ENCODE measurements at regions of chr1 and their contacts with region 1.

Region 1: GRCh38 chr1:101136739-101137138 is 100.1 kb upstream of the S1PR1 start:
- DNase-seq: peak; percentile 45
- ATAC-seq: peak; percentile 85
- H3K4me3 Mint-ChIP-seq: peak overlapping the region; percentile 38
- H3K27ac Mint-ChIP-seq: peak overlapping the region; percentile 91
- H3K4me1 Mint-ChIP-seq: peaks cover 69% of the 10 kb centered on the region
- H3K27me3 Mint-ChIP-seq: no peaks in the 10 kb centered on the region

Region 2: GRCh38 chr1:100785470-100786052 is 351.2 kb before region 1 on chr1:
- CTCF ChIA-PET with region 1: no interaction called
- POLR2A ChIA-PET with region 1: no interaction called
- intact Hi-C with region 1: no loop called
- DNase-seq: no peak
- ATAC-seq: no peak
- H3K4me3 Mint-ChIP-seq: no peak overlapping the region
- H3K27ac Mint-ChIP-seq: no peak overlapping the region
- H3K4me1 Mint-ChIP-seq: no peaks in the 10 kb centered on the region
- H3K27me3 Mint-ChIP-seq: peaks cover 11% of the 10 kb centered on the region

Region 3: DNA sequence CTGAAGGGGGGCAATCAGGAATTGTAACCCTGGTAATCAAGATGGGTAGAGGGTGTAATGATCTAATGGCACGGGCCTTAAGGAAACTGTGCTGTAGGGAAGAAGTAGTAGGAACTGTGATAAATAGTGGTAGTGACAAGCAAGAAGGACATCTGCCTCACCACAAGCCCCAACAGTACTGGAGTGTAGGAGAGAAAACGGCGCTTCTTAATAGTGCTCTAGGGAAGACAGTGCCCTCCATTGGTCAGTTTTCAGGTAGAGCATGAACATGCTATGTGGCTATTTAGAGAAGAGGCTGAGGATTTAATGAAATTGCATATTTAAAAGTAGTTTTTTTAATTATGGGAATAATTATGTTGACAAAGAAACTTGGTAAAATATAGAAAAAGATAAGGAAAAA is 208.6 kb before region 1 on chr1:
- CTCF ChIA-PET with region 1: no interaction called
- POLR2A ChIA-PET with region 1: no interaction called
- intact Hi-C with region 1: loop called in 1 of 2 experiments (anchors 2 kb)
- DNase-seq: no peak
- ATAC-seq: no peak
- H3K4me3 Mint-ChIP-seq: no peak overlapping the region
- H3K27ac Mint-ChIP-seq: no peak overlapping the region
- H3K4me1 Mint-ChIP-seq: peaks cover 62% of the 10 kb centered on the region
- H3K27me3 Mint-ChIP-seq: no peaks in the 10 kb centered on the region

Region 4: GRCh38 chr1:101025657-101026504 is 110.9 kb before region 1 on chr1 and contains the start of gene DPH5:
- CTCF ChIA-PET with region 1: no interaction called
- POLR2A ChIA-PET with region 1: no interaction called
- intact Hi-C with region 1: loop called in 1 of 2 experiments (anchors 5 kb)
- DNase-seq: peak; percentile 95
- ATAC-seq: peak; percentile 96
- H3K4me3 Mint-ChIP-seq: peak within 1 kb of the TSS; percentile 93
- H3K27ac Mint-ChIP-seq: peak within 1 kb of the TSS; percentile 98
- H3K4me1 Mint-ChIP-seq: peaks cover 55% of the 10 kb centered on the region
- H3K27me3 Mint-ChIP-seq: no peaks in the 10 kb centered on the region
- total RNA-seq, gene DPH5: 48.4 to 59.6 TPM

Region 5: DNA sequence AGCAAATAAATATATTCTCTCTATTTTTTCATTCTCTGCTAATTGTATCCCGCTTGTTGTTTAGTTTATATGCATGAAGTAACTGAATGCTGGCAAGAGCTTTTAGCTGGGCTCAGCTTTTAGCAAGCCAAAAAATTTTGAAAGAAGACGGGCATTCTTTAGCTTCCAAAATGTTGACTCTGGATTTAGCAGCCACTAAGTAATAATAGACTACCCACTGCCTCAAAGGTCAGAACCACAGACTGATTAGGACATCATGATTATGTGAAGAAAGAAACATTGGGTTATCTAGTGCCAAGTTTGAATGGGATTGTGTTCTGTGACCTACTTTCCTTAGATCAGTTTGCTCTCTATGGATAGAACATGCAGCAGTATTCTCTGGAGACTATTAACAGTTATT is 30.9 kb before region 1 on chr1:
- CTCF ChIA-PET with region 1: no interaction called
- POLR2A ChIA-PET with region 1: no interaction called
- intact Hi-C with region 1: no loop called
- DNase-seq: no peak
- ATAC-seq: no peak
- H3K4me3 Mint-ChIP-seq: no peak overlapping the region
- H3K27ac Mint-ChIP-seq: no peak overlapping the region
- H3K4me1 Mint-ChIP-seq: peaks cover 31% of the 10 kb centered on the region
- H3K27me3 Mint-ChIP-seq: no peaks in the 10 kb centered on the region

Region 6: GRCh38 chr1:101148980-101149379 is 12.2 kb after region 1 on chr1:
- CTCF ChIA-PET with region 1: interaction called, 14 read pairs
- POLR2A ChIA-PET with region 1: interaction called, 4 read pairs
- intact Hi-C with region 1: no loop called
- DNase-seq: no peak
- ATAC-seq: peak; percentile 40
- H3K4me3 Mint-ChIP-seq: no peak overlapping the region
- H3K27ac Mint-ChIP-seq: no peak overlapping the region
- H3K4me1 Mint-ChIP-seq: peaks cover 49% of the 10 kb centered on the region
- H3K27me3 Mint-ChIP-seq: no peaks in the 10 kb centered on the region

Region 7: DNA sequence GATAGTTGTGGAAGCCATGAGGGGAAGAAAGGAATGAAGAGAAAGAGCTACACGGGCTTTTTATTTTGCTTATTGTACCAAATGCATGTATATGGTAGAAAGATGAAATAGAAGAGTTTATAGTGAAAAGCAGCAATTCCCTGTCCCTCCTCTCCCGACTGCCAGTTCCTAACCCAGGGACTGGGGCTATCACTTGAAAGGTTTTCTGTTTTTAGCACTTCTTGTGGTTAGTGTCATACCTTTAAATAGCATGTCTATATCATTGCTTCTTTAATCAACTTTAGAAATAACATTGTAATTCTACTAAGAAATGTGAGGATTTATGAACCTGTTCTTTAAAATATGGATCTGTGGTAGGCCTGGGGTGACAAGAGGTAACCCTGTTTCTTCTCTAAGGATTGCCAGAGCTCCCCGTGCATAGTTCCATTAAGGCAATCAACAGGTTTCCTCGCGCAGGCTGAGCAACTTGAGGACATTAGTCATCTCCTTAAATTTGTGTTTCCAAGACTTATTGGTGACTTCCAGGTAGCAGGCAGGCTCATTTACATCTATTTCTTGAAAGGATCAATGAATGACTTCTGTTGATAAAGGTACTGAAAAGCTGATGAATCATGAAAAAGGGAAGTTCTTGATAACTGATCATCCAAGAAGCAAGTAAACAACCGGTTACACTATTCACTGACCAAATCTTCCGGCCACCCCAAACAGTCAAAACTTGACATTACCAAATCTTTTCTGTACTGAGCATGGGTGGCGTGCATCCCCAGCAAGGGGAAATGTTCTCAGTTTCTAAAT is 62.3 kb after region 1 on chr1:
- CTCF ChIA-PET with region 1: interaction called, 3 read pairs
- POLR2A ChIA-PET with region 1: no interaction called
- intact Hi-C with region 1: loop called (anchors 1 to 2 kb)
- DNase-seq: peak; percentile 79
- ATAC-seq: peak; percentile 86
- H3K4me3 Mint-ChIP-seq: no peak overlapping the region
- H3K27ac Mint-ChIP-seq: peak overlapping the region; percentile 85
- H3K4me1 Mint-ChIP-seq: peaks cover 35% of the 10 kb centered on the region
- H3K27me3 Mint-ChIP-seq: no peaks in the 10 kb centered on the region

Region 8: DNA sequence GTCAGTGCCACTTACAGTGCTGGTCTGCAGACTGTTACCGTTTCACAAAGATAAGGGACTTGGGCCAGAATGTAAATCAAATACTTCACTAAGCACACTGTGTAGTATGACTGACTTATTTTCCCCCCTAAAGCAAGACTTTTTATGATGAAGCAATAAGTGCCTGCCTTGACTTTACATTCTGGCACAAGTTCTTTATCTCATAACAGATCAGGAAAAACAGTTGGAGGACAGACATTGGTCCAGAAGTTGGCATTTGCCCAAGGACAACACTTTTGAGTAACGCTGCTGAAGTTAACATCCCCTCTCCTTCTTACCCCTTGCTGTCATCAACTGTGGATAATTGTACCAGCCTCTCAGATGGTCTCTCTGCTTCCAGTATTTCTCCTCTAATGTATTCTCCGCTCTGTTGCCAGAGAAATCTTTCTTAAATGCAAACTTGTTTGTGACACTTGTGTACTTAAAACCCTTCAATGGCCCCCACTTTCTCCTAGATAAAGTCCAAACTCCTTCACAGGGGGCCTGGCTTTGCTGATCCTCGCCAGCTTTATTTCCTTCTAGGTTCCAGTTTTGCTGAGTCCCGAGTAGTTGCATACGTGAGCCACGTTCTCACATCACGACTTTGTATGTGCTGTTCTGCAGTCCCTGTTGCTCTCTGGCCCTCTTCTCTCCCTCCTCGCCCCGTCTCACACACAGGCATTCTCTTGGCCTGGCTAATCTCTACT is 145.7 kb after region 1 on chr1:
- CTCF ChIA-PET with region 1: interaction called, 31 read pairs
- POLR2A ChIA-PET with region 1: interaction called, 5 read pairs
- intact Hi-C with region 1: loop called in 1 of 2 experiments (anchors 1 kb)
- DNase-seq: no peak
- ATAC-seq: no peak
- H3K4me3 Mint-ChIP-seq: no peak overlapping the region
- H3K27ac Mint-ChIP-seq: peak overlapping the region; percentile 95
- H3K4me1 Mint-ChIP-seq: peaks cover 93% of the 10 kb centered on the region
- H3K27me3 Mint-ChIP-seq: no peaks in the 10 kb centered on the region

Measured in activated CD4-positive, alpha-beta T cell treated with anti-CD3 and anti-CD28 coated beads for 36 hours (primary cell).